GM12878 (cell line): ENCODE measurements at regions of chr2 and their contacts with region 1.

Region 1: DNA sequence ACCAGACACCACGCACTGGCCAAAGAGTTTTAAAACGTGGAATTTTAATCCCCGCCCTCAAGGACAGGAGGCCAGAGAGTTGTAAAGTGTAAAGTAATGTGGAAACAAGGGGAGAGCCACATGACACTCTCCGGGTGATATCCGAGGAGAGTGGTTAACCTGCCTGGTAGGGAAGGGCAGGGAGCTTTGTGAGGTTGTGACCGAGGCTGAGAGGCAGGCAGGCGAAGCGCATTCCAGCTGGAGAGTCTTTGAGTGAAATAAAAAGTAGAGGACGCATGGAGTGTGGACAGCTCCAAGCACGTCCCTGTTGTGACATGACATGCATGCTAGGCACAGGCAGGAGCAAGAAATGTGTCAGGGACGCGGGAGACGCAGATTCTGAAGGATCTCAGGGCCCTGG is 539.5 kb downstream of the RNF144A start:
- DNase-seq: no peak
- ATAC-seq: no peak
- H3K4me3 ChIP-seq: no peak overlapping the region
- H3K27ac ChIP-seq: no peak overlapping the region
- H3K4me1 ChIP-seq: no peaks in the 10 kb centered on the region
- H3K27me3 ChIP-seq: no peaks in the 10 kb centered on the region
- CTCF ChIP-seq: no peak
- EP300 ChIP-seq: no peak
- POLR2A ChIP-seq: no peak
- RAD21 ChIP-seq: no peak

Region 2: DNA sequence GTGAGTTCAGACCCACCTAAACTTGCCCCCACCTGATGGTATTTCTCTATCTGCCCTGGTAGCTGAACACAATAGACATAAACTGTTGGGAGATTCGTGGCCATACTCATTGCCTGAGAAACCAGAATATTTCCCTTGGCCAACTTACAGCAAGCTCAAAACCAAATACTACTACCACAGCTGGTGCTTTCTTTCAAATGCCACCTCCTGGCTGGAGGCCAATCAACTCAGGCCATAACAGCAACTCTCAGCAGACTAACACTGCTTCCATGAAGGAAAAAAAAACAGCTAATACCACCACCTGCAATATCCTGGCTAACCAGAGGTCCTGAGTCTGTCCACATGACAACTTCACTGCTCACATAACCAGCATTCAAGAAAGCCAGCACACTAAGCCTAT is 964.2 kb before region 1 on chr2:
- CTCF ChIA-PET with region 1: no interaction called
- POLR2A ChIA-PET with region 1: no interaction called
- RAD21 ChIA-PET with region 1: no interaction called
- SMC1A ChIA-PET with region 1: no interaction called
- in situ Hi-C with region 1: no loop called
- intact Hi-C with region 1: loop called (anchors 5 kb)
- DNase-seq: no peak
- ATAC-seq: no peak
- H3K4me3 ChIP-seq: no peak overlapping the region
- H3K27ac ChIP-seq: no peak overlapping the region
- H3K4me1 ChIP-seq: no peaks in the 10 kb centered on the region
- H3K27me3 ChIP-seq: no peaks in the 10 kb centered on the region
- CTCF ChIP-seq: no peak
- EP300 ChIP-seq: no peak
- POLR2A ChIP-seq: no peak
- RAD21 ChIP-seq: no peak

Region 3: GRCh38 chr2:7539760-7540159 is 83.0 kb after region 1 on chr2:
- CTCF ChIA-PET with region 1: no interaction called
- POLR2A ChIA-PET with region 1: no interaction called
- RAD21 ChIA-PET with region 1: no interaction called
- SMC1A ChIA-PET with region 1: no interaction called
- in situ Hi-C with region 1: no loop called
- intact Hi-C with region 1: no loop called
- DNase-seq: no peak
- ATAC-seq: no peak
- H3K4me3 ChIP-seq: no peak overlapping the region
- H3K27ac ChIP-seq: no peak overlapping the region
- H3K4me1 ChIP-seq: no peaks in the 10 kb centered on the region
- H3K27me3 ChIP-seq: no peaks in the 10 kb centered on the region
- CTCF ChIP-seq: no peak
- EP300 ChIP-seq: no peak
- POLR2A ChIP-seq: no peak
- RAD21 ChIP-seq: no peak